ENCODE measurements at regions of chr19 and their contacts with region 1.

Region 1: DNA sequence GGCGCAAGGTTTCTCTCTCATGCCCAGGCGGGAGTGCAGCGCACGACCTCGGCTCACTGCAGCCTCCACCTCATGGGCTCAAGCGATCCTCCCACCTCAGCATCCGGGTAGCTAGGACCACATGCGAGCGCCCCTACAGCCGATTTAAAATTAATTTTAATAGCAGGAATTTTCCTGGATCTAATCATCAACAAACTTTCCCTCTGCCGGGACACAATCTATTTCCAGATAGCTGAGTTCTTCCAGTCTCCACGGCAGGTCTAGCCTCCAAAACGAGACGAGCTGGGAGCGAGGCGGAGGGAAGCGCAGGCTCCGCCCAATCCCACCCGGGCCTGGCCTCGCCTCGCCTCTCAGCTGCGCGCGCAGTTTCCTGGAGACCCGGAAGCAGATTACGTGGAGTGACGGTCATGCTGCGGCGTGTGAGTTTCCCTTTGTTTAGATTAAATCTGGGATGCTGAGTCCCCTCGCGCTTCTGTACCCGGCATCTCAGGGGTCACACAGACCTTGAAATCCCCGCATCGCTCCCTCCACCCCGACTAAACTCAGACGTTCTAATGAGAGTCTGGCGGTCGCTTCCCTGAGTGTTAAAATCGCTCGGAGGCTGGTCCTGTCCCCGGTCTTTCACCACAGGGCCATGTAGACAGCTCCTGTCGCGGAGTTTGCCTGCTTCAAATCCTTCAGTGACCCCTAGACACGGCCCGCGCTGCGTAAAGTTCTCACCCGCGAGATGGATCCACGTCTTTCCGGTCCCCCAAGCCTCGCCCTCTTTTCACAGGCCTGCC is at the start of gene ZNF880:
- DNase-seq: peak; percentile 38
- ATAC-seq: peak; percentile 100
- H3K4me3 ChIP-seq: peak within 1 kb of the TSS; percentile 73
- H3K27ac ChIP-seq: peak within 1 kb of the TSS; percentile 97
- H3K4me1 ChIP-seq: no peaks in the 10 kb centered on the region
- H3K27me3 ChIP-seq: no peaks in the 10 kb centered on the region
- CTCF ChIP-seq: no peak
- EP300 ChIP-seq: no peak
- POLR2A ChIP-seq: peak; percentile 89
- RAD21 ChIP-seq: no peak
- polyA plus RNA-seq, gene ZNF880: 43.1 to 45.2 TPM

Region 2: DNA sequence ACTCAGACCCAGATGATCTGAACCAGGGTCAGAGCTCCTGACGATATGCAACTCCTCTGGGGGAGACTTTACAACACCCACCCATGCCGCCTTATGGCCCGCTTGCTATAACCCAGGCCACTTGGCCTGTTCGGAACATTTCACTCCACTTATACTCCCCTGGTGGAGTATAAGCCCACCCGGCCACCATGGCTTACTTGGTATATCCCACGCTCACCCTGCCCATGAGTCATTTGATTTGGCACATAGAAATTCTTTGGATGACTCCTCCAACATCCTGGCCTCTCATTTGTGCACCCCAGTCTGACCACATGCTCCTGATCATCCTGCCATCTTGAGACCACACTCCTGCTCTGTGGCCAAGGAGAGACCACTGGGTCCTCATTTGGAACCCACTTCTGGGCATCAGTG is 671.5 kb before region 1 on chr19:
- CTCF ChIA-PET with region 1: no interaction called
- POLR2A ChIA-PET with region 1: interaction called, 10 read pairs
- RAD21 ChIA-PET with region 1: no interaction called
- SMC1A ChIA-PET with region 1: no interaction called
- in situ Hi-C with region 1: no loop called
- intact Hi-C with region 1: no loop called
- DNase-seq: no peak
- ATAC-seq: no peak
- H3K4me3 ChIP-seq: no peak overlapping the region
- H3K27ac ChIP-seq: no peak overlapping the region
- H3K4me1 ChIP-seq: no peaks in the 10 kb centered on the region; the same call in 1 of the 2 replicates
- H3K27me3 ChIP-seq: no peaks in the 10 kb centered on the region; a peak in 2 of 4 replicates
- CTCF ChIP-seq: no peak
- EP300 ChIP-seq: no peak
- POLR2A ChIP-seq: no peak
- RAD21 ChIP-seq: no peak

Region 3: GRCh38 chr19:52351511-52351910 is 18.2 kb before region 1 on chr19:
- CTCF ChIA-PET with region 1: no interaction called
- POLR2A ChIA-PET with region 1: no interaction called
- RAD21 ChIA-PET with region 1: no interaction called
- SMC1A ChIA-PET with region 1: no interaction called
- in situ Hi-C with region 1: no loop called
- intact Hi-C with region 1: no loop called
- DNase-seq: no peak
- ATAC-seq: no peak
- H3K4me3 ChIP-seq: no peak overlapping the region
- H3K27ac ChIP-seq: no peak overlapping the region
- H3K4me1 ChIP-seq: no peaks in the 10 kb centered on the region
- H3K27me3 ChIP-seq: no peaks in the 10 kb centered on the region
- CTCF ChIP-seq: 0 out of 6 replicates have a peak, but pooled peaks of 2 of the 3 experiments have one; percentile 6
- EP300 ChIP-seq: no peak
- POLR2A ChIP-seq: no peak
- RAD21 ChIP-seq: no peak

Measured in GM12878 (cell line).